CD4-positive, alpha-beta T cell (primary cell): ENCODE measurements at regions of chr1 and their contacts with region 1.

Region 1: GRCh38 chr1:45011837-45012638 is at the start of gene UROD:
- DNase-seq: peak; percentile 77 to 96 (median 86)
- ATAC-seq: peak; percentile 82
- H3K4me3 ChIP-seq: peak within 1 kb of the TSS; percentile 84
- H3K4me3 Mint-ChIP-seq: peak within 1 kb of the TSS; percentile 89
- H3K27ac ChIP-seq: peak within 1 kb of the TSS; percentile 59 to 62
- H3K27ac Mint-ChIP-seq: peak within 1 kb of the TSS; percentile 91
- H3K4me1 ChIP-seq: peaks cover 63% of the 10 kb centered on the region
- H3K4me1 Mint-ChIP-seq: peaks cover 61% of the 10 kb centered on the region
- H3K27me3 ChIP-seq: no peaks in the 10 kb centered on the region
- H3K27me3 Mint-ChIP-seq: no peaks in the 10 kb centered on the region
- CTCF ChIP-seq: no peak
- total RNA-seq, gene UROD: 41.0 to 42.4 TPM

Region 2: DNA sequence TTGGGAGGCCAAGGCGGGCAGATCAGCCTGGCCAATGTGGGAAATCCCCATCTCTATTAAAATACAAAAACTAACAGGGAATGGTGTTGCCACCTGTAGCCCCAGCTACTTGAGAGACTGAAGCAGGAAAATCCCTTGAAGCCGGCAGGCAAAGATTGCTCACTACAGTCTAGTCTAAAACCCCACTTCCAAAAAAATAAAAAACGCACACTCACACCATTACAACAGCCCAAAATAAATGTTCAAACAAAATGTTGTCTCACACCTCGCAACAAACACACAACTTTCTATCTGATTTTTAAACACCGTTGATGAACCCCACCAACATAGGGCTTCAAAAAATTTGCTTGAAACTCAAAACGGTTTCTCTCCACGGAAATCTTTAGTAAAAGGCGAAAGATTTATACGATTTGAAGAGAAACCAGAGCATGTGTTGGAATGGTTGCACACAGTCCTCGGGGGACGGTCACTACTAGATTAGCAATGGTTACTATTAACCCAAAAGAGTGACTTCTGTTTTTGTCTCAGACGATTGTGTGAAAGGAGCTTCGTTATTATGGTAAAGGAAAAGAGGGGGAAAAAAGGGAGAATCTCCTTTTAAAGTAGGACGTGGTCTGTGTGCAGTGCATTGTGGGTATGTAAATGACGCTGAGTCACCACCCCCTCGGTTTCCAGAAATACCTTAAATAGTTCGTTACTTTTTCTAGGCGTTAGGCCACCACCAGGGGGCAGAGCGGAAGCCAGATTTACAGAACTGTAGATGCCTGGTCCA is 281.1 kb before region 1 on chr1 and contains the start of gene RNU5D-1:
- CTCF ChIA-PET with region 1: interaction called, 8 read pairs
- POLR2A ChIA-PET with region 1: interaction called, 22 read pairs
- intact Hi-C with region 1: loop called (anchors 5 kb)
- DNase-seq: peak; percentile 87 to 98 (median 94)
- ATAC-seq: peak; percentile 76
- H3K4me3 ChIP-seq: peak within 1 kb of the TSS; percentile 46
- H3K4me3 Mint-ChIP-seq: peak within 1 kb of the TSS; percentile 68
- H3K27ac ChIP-seq: peak within 1 kb of the TSS; percentile 93 to 96
- H3K27ac Mint-ChIP-seq: peak within 1 kb of the TSS; percentile 97
- H3K4me1 ChIP-seq: peaks cover 33% of the 10 kb centered on the region
- H3K4me1 Mint-ChIP-seq: peaks cover 35% of the 10 kb centered on the region
- H3K27me3 ChIP-seq: no peaks in the 10 kb centered on the region
- H3K27me3 Mint-ChIP-seq: no peaks in the 10 kb centered on the region
- CTCF ChIP-seq: peak; percentile 77
- total RNA-seq, gene RNU5D-1: not detected

Region 3: GRCh38 chr1:44799770-44800584 is 212.1 kb before region 1 on chr1 and contains the start of gene PLK3:
- CTCF ChIA-PET with region 1: no interaction called
- POLR2A ChIA-PET with region 1: interaction called, 38 read pairs
- intact Hi-C with region 1: loop called in 1 of 2 experiments (anchors 10 kb)
- DNase-seq: peak; percentile 97 to 100 (median 98)
- ATAC-seq: peak; percentile 77
- H3K4me3 ChIP-seq: peak within 1 kb of the TSS; percentile 99
- H3K4me3 Mint-ChIP-seq: peak within 1 kb of the TSS; percentile 99
- H3K27ac ChIP-seq: peak within 1 kb of the TSS; percentile 88 to 98
- H3K27ac Mint-ChIP-seq: peak within 1 kb of the TSS; percentile 86
- H3K4me1 ChIP-seq: peaks cover 48% of the 10 kb centered on the region
- H3K4me1 Mint-ChIP-seq: peaks cover 39% of the 10 kb centered on the region
- H3K27me3 ChIP-seq: no peaks in the 10 kb centered on the region
- H3K27me3 Mint-ChIP-seq: no peaks in the 10 kb centered on the region
- CTCF ChIP-seq: peak; percentile 79
- total RNA-seq, gene PLK3: 794 TPM

Region 4: DNA sequence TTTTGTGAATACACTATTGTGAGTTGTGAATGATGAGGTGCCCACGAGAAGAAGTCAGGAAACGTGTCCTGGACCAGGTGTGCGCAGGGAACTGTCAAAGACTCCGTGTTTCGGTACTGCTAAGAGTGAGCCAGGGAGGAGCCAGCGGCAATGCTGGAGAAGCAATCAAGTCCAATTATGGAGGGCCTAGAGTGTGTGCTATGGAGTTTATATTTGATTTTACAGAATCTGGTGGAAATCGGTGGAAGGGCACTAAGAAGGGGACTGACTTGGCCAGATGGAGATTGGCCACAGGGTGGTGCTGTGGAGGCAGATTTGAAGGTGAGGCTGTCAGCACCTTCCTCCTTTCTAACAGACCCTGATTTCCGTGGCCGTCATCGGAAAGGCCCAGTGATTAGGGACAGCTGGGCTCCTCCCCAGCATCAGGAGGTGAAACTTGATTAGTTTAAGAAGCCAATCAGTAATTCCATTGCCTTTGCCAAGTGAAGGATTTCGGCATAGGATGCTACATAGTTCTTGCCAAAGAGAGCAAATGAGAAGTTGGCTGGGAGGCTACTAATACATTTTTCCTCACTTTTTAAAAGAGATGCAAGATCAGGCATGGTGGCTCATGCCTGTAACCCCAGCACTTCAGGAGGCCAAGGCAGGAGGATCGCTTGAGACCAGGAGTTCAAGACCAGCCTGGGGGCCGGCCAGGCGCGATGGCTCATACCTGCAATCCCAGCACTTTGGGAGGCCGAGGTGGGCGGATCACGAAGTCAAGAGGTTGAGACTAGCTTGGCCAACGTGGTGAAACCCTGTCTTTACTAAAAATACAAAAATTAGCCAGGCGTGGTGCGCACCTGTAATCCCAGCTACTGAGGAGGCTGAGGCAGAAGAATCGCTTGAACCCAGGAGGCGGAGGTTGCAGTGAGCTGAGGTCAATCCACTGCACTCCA is 176.0 kb before region 1 on chr1:
- CTCF ChIA-PET with region 1: no interaction called
- POLR2A ChIA-PET with region 1: no interaction called
- intact Hi-C with region 1: loop called in 1 of 2 experiments (anchors 5 kb)
- DNase-seq: peak; percentile 77 to 93 (median 84)
- ATAC-seq: peak; percentile 98
- H3K4me3 ChIP-seq: no peak overlapping the region
- H3K4me3 Mint-ChIP-seq: no peak overlapping the region
- H3K27ac ChIP-seq: no peak overlapping the region
- H3K27ac Mint-ChIP-seq: no peak overlapping the region
- H3K4me1 ChIP-seq: peaks cover 9% of the 10 kb centered on the region
- H3K4me1 Mint-ChIP-seq: peaks cover 8% of the 10 kb centered on the region
- H3K27me3 ChIP-seq: no peaks in the 10 kb centered on the region
- H3K27me3 Mint-ChIP-seq: peaks cover 11% of the 10 kb centered on the region
- CTCF ChIP-seq: peak; percentile 91

Region 5: DNA sequence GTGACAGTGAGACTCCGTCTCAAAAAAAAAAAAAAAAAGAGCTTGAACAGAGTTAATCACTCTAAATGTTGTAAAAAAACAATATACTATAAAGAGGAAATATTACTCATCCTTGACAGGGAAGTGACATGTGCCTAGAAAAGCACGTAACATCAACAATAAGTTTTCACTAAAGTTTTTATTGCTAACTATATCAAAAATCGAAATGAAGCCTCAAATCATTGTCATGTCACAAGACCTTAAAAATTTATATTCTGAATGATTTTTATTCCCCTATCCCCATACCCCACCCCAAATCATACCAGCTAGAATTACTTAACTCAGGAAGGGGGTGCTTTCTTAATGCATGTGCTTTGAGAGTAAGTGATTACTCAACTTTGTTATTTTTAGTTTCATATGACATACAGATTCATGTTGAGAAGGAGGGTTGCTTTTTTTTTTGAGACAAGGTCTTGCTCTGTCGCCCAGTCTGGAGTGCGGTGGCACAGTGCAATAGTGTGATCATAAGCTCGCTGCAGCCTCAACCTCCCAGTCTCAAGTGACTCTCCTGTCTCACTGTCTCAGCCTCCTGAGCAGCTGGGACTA is 381.8 kb after region 1 on chr1:
- CTCF ChIA-PET with region 1: no interaction called
- POLR2A ChIA-PET with region 1: no interaction called
- intact Hi-C with region 1: no loop called
- DNase-seq: peak in 3 of 14 experiments; percentile 13 to 62 (median 41)
- ATAC-seq: no peak
- H3K4me3 ChIP-seq: no peak overlapping the region
- H3K4me3 Mint-ChIP-seq: no peak overlapping the region
- H3K27ac ChIP-seq: no peak overlapping the region
- H3K27ac Mint-ChIP-seq: no peak overlapping the region
- H3K4me1 ChIP-seq: peaks cover 4% of the 10 kb centered on the region
- H3K4me1 Mint-ChIP-seq: no peaks in the 10 kb centered on the region
- H3K27me3 ChIP-seq: no peaks in the 10 kb centered on the region
- H3K27me3 Mint-ChIP-seq: no peaks in the 10 kb centered on the region
- CTCF ChIP-seq: no peak

Region 6: DNA sequence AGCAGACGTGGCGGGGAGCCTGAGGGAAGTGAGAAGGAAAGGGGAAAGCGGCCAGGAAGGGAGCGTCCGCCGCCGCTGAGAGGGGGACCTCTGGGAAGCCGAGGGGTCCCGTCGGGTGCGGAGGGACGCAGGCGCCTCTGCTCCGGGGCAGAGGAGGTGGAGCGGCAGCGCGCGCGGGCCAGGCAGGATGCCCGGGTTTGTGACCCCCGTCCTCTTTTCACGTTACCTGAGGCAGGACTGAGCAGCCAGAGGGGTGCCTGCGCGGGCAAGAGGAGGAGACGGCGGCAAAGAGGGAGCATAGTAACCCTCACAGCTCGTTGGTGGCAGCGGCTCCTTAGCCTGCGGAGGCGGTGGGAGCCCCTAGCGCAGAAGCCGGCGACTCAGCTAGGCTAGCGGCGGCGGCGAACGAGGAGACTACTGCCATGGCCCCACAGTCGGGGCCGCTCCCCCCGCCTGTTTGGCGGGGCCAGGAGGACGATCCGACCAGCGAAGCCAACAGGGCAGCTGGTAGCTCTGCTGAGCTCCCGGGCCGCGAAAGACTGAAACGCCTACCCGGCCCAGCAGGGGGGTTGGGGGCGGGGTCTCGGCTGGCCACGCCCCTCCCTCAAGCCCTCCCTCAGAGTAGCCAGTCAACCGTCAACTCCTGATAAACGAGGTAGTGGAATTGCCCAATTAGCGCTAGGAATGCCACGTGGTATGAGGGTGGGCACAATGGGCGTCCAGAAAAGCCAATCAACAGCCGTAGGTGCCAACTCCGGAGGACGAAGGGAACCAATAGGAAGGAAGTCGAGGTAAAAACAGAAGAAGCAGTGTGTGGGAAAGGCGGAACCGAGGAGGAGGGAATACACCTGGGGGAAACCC is 478.8 kb after region 1 on chr1 and contains the start of gene TESK2:
- CTCF ChIA-PET with region 1: interaction called, 20 read pairs
- POLR2A ChIA-PET with region 1: interaction called, 48 read pairs
- intact Hi-C with region 1: loop called in 1 of 2 experiments (anchors 1 kb)
- DNase-seq: peak; percentile 92 to 100 (median 95)
- ATAC-seq: peak; percentile 92
- H3K4me3 ChIP-seq: peak within 1 kb of the TSS; percentile 82
- H3K4me3 Mint-ChIP-seq: no peak within 1 kb of the TSS
- H3K27ac ChIP-seq: peak within 1 kb of the TSS; percentile 55 to 70
- H3K27ac Mint-ChIP-seq: no peak within 1 kb of the TSS
- H3K4me1 ChIP-seq: peaks cover 28% of the 10 kb centered on the region
- H3K4me1 Mint-ChIP-seq: peaks cover 5% of the 10 kb centered on the region
- H3K27me3 ChIP-seq: no peaks in the 10 kb centered on the region
- H3K27me3 Mint-ChIP-seq: no peaks in the 10 kb centered on the region
- CTCF ChIP-seq: no peak
- total RNA-seq, gene TESK2: 2.8 to 3.4 TPM

Region 7: DNA sequence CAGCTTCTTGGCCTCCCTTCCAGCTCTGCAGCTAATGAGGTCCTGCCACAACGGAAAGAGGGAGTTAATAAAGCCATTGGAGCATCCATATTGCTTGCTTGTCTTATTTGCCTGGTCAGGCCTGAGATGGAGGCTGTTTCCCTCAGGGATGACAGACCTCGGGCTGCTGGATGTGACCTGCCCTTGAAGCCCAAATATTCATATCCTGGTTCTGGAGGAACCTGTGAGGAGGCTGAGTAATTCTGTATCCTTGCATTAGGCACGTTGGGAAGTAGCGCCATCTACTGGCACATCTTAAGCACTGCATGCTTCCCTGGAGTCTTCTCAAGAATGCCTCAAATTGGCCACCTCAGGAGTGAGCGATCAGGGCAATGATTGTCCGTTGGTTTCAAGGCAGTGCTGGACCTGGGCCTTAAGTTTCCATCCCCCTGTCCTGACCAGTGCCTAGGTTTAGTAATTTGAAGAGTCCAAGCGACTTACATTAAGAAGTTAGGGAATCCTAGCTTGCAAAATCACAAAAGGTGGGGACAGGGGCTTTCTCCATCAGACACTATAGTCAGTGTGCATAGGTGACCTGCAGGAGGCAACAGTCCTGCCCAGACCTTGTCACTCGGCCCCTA is 558.0 kb after region 1 on chr1:
- CTCF ChIA-PET with region 1: no interaction called
- POLR2A ChIA-PET with region 1: no interaction called
- intact Hi-C with region 1: loop called (anchors 2 to 5 kb)
- DNase-seq: peak; percentile 55 to 87 (median 60)
- ATAC-seq: peak; percentile 99
- H3K4me3 ChIP-seq: no peak overlapping the region
- H3K4me3 Mint-ChIP-seq: no peak overlapping the region
- H3K27ac ChIP-seq: no peak overlapping the region
- H3K27ac Mint-ChIP-seq: no peak overlapping the region
- H3K4me1 ChIP-seq: peaks cover 2% of the 10 kb centered on the region
- H3K4me1 Mint-ChIP-seq: peaks cover 5% of the 10 kb centered on the region
- H3K27me3 ChIP-seq: no peaks in the 10 kb centered on the region
- H3K27me3 Mint-ChIP-seq: no peaks in the 10 kb centered on the region
- CTCF ChIP-seq: peak; percentile 95